ENCODE measurements at regions of chr13 and their contacts with region 1.

Region 1: GRCh38 chr13:113275387-113275786 is 21.7 kb upstream of the LAMP1 start:
- DNase-seq: peak; percentile 25 to 49 (median 30)
- H3K4me3 ChIP-seq: no peak overlapping the region
- H3K4me3 Mint-ChIP-seq: peak overlapping the region in 1 of 8 donors; percentile 30
- H3K27ac ChIP-seq: no peak overlapping the region
- H3K27ac Mint-ChIP-seq: peak overlapping the region in 1 of 7 donors; percentile 32
- H3K4me1 ChIP-seq: no peaks in the 10 kb centered on the region
- H3K4me1 Mint-ChIP-seq: peaks cover 5 to 12% (median 5%) of the 10 kb centered on the region in 4 donors
- H3K27me3 ChIP-seq: no peaks in the 10 kb centered on the region
- H3K27me3 Mint-ChIP-seq: peaks cover 1 to 8% of the 10 kb centered on the region in 2 donors

Region 2: DNA sequence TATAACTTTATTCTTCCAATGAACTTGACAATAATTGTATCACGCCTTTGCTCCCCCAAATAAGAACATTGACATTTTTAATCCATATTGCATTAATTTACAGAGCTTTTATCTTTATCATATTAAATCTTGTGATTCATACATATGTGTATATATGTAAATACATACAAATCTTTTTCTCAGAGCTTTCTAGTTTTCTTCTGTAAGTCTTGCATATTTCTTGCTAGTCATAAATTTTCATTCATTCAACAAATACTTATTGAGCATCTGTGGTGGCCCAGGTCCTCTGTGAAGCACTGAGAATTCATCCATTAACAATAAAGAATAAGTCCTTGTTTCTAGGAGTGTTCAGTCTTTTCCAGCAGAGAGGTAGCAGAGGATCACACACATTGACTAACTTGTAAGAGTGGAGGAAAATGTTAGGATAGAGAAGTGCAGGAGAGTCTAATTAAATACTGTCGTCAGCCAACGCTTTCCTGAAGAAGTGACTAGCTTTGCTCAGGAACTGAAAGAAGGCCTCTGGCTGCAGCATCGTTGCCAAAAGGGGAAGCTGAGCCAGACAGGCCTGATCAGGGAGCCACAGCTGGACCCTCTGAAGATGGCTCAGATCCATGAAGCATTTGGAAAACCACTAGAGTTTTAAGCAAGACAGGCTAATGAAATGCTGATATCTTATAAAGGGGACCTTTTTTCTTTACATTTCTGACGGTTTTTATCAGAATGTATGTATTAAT is 16.9 kb before region 1 on chr13:
- CTCF ChIA-PET with region 1: no interaction called
- POLR2A ChIA-PET with region 1: no interaction called
- intact Hi-C with region 1: no loop called
- DNase-seq: no peak
- H3K4me3 ChIP-seq: no peak overlapping the region
- H3K4me3 Mint-ChIP-seq: no peak overlapping the region
- H3K27ac ChIP-seq: no peak overlapping the region
- H3K27ac Mint-ChIP-seq: peak overlapping the region in 2 of 7 donors; percentile 45 to 68
- H3K4me1 ChIP-seq: no peaks in the 10 kb centered on the region
- H3K4me1 Mint-ChIP-seq: no peaks in the 10 kb centered on the region
- H3K27me3 ChIP-seq: no peaks in the 10 kb centered on the region
- H3K27me3 Mint-ChIP-seq: no peaks in the 10 kb centered on the region

Region 3: GRCh38 chr13:113393563-113394338 is 118.4 kb after region 1 on chr13:
- CTCF ChIA-PET with region 1: interaction called, 4 read pairs
- POLR2A ChIA-PET with region 1: no interaction called
- intact Hi-C with region 1: loop called (anchors 1 kb)
- DNase-seq: peak; percentile 73 to 85 (median 83)
- H3K4me3 ChIP-seq: peak overlapping the region; percentile 5 to 70
- H3K4me3 Mint-ChIP-seq: peak overlapping the region; percentile 86 to 89 (median 88)
- H3K27ac ChIP-seq: no peak overlapping the region
- H3K27ac Mint-ChIP-seq: peak overlapping the region in 5 of 7 donors; percentile 36 to 86 (median 62)
- H3K4me1 ChIP-seq: peaks cover 11% of the 10 kb centered on the region
- H3K4me1 Mint-ChIP-seq: peaks cover 2 to 7% (median 4%) of the 10 kb centered on the region in 4 donors
- H3K27me3 ChIP-seq: no peaks in the 10 kb centered on the region
- H3K27me3 Mint-ChIP-seq: no peaks in the 10 kb centered on the region